Activated CD8-positive, alpha-beta T cell treated with anti-CD3 and anti-CD28 coated beads, Interleukin-2, amount 10 ng/mL, durations not matched to agents 7 days and 5 days (primary cell): ENCODE measurements at regions of chr20 and their contacts with region 1.

Region 1: GRCh38 chr20:63864847-63865640 is at the start of gene TPD52L2:
- DNase-seq: peak; percentile 99
- ATAC-seq: peak; percentile 90
- H3K4me3 Mint-ChIP-seq: peak within 1 kb of the TSS; percentile 94
- H3K27ac Mint-ChIP-seq: peak within 1 kb of the TSS; percentile 96
- H3K4me1 Mint-ChIP-seq: peaks cover 22% of the 10 kb centered on the region
- H3K27me3 Mint-ChIP-seq: no peaks in the 10 kb centered on the region
- total RNA-seq, gene TPD52L2: 35.7 to 40.0 TPM

Region 2: GRCh38 chr20:63707549-63708300 is 157.3 kb before region 1 on chr20 and contains the starts of genes ARFRP1 and ZGPAT:
- CTCF ChIA-PET with region 1: interaction called, 46 read pairs
- POLR2A ChIA-PET with region 1: interaction called, 4 read pairs
- DNase-seq: peak; percentile 90
- ATAC-seq: peak; percentile 81
- H3K4me3 Mint-ChIP-seq: peak within 1 kb of the TSS; percentile 90
- H3K27ac Mint-ChIP-seq: peak within 1 kb of the TSS; percentile 81
- H3K4me1 Mint-ChIP-seq: peaks cover 44% of the 10 kb centered on the region
- H3K27me3 Mint-ChIP-seq: no peaks in the 10 kb centered on the region
- total RNA-seq, gene ARFRP1: 55.2 to 57.6 TPM
- total RNA-seq, gene ZGPAT: 38.6 to 43.5 TPM

Region 3: DNA sequence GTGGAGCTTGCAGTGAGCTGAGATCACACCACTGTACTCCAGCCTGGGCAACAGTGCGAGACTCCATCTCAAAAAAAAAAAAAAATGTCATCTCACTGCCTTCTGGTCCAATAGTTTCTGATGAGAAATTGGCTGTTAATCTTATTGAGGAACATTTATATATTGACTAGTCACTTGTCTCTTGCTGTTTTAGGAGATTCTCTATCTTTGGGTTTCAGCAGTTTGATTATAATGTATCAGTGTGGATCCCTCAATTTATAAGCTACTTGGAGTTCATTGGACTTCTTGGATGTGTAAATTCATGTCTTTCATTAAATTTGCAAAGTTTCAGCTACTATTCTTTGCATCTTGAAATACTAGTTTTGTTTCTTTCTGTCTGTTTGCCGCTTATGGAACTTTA is 146.0 kb before region 1 on chr20:
- CTCF ChIA-PET with region 1: no interaction called
- POLR2A ChIA-PET with region 1: no interaction called
- DNase-seq: no peak
- ATAC-seq: no peak
- H3K4me3 Mint-ChIP-seq: no peak overlapping the region
- H3K27ac Mint-ChIP-seq: no peak overlapping the region
- H3K4me1 Mint-ChIP-seq: peaks cover 22% of the 10 kb centered on the region
- H3K27me3 Mint-ChIP-seq: no peaks in the 10 kb centered on the region

Region 4: GRCh38 chr20:63739130-63740069 is 125.6 kb before region 1 on chr20 and contains the start of gene SLC2A4RG:
- CTCF ChIA-PET with region 1: interaction called, 8 read pairs
- POLR2A ChIA-PET with region 1: interaction called, 14 read pairs
- DNase-seq: peak; percentile 71
- ATAC-seq: peak; percentile 51
- H3K4me3 Mint-ChIP-seq: peak within 1 kb of the TSS; percentile 87
- H3K27ac Mint-ChIP-seq: no peak within 1 kb of the TSS
- H3K4me1 Mint-ChIP-seq: peaks cover 19% of the 10 kb centered on the region
- H3K27me3 Mint-ChIP-seq: no peaks in the 10 kb centered on the region
- total RNA-seq, gene SLC2A4RG: 97.2 TPM

Region 5: DNA sequence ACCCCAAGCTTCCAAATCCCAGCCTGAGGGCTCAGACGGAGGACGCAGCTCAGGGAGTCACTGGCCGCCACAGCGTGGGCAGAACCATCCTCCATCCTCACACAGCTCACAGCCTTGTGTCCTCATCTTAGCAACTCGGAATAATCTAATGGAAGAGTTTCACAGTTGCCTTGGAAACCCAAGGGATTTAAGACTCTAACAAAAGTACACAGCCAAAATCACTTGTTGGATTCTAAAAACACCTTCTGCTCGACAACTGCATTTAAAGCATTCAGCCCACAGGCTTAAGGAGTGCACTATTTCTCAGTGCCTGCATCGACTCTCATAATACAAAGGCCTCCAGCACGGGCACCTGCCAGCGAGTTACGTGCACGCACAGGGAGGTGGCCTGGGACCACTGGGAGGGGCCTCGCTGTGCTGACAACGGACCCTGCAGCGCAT is 79.3 kb before region 1 on chr20:
- CTCF ChIA-PET with region 1: interaction called, 17 read pairs
- POLR2A ChIA-PET with region 1: no interaction called
- DNase-seq: no peak
- ATAC-seq: no peak
- H3K4me3 Mint-ChIP-seq: no peak overlapping the region
- H3K27ac Mint-ChIP-seq: no peak overlapping the region
- H3K4me1 Mint-ChIP-seq: peaks cover 22% of the 10 kb centered on the region
- H3K27me3 Mint-ChIP-seq: no peaks in the 10 kb centered on the region

Region 6: GRCh38 chr20:63896264-63897105 is 31.4 kb after region 1 on chr20:
- CTCF ChIA-PET with region 1: interaction called, 10 read pairs
- POLR2A ChIA-PET with region 1: interaction called, 5 read pairs
- DNase-seq: peak; percentile 46
- ATAC-seq: peak; percentile 28
- H3K4me3 Mint-ChIP-seq: peak overlapping the region; percentile 88
- H3K27ac Mint-ChIP-seq: peak overlapping the region; percentile 96
- H3K4me1 Mint-ChIP-seq: peaks cover 45% of the 10 kb centered on the region
- H3K27me3 Mint-ChIP-seq: no peaks in the 10 kb centered on the region